Naive thymus-derived CD4-positive, alpha-beta T cell (primary cell): ENCODE measurements at regions of chr2 and their contacts with region 1.

Region 1: DNA sequence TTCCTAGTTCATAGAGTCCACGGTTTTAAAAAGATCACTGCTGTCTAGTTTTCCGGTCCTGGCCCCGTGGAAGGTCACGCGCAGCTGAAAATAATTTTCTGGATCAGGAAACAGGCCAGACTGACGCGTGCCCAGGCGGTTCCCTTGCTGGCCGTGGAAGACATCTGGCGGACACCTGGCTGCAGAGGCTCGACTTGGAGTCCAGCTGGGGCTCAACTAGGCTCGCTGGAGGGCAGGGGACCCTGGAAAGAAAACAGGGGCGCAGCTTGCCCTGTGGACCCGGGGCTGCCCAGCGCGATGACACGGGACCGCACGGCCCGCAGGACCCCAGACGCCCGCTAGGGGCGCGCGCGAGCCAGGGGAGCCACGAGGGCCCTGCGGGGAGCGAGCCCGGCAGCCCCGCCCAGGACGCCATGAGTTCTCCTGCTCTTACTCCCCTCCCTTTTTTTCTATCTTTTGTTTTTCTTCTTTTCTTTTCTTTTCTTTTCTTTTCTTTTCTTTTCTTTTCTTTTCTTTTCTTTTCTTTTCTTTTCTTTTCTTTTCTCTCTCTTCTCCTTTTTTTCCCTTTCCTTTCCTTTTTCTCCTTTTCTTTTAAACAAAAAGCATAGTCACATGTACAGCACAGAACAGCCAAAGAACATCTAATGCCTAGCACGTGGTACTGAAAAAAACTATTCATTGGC is 43.2 kb upstream of the UBE2F start:
- DNase-seq: peak; percentile 57 to 90 (median 79)
- ATAC-seq: peak; percentile 99
- H3K4me3 ChIP-seq: peak overlapping the region; percentile 55
- H3K4me3 Mint-ChIP-seq: peak overlapping the region; percentile 37 to 81 (median 68)
- H3K27ac ChIP-seq: peak overlapping the region; percentile 20
- H3K27ac Mint-ChIP-seq: peak overlapping the region in 8 of 9 donors; percentile 16 to 86 (median 56)
- H3K4me1 ChIP-seq: no peaks in the 10 kb centered on the region
- H3K4me1 Mint-ChIP-seq: peaks cover 11 to 42% (median 31%) of the 10 kb centered on the region in 7 donors
- H3K27me3 ChIP-seq: no peaks in the 10 kb centered on the region
- H3K27me3 Mint-ChIP-seq: peaks cover 0 to 2% (median 0%) of the 10 kb centered on the region in 5 donors

Region 2: DNA sequence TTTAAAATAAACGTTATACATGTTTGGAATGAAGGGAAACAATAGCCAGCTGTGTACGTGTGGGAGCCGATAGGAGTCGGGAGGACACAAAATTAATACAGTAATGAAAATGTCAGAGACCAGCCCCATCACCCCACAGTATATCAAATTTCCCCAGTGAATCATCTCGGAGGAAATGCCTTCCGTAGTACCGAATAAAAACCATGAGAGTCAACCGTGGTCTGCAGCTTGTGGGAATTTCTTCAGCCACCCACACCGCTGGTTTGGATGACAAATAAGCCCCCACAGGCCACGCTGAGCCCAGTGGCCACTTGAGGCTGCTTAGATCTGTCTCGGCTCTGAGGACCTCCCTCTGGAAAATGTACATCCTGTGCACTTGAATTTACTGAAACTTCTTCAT is 643.4 kb before region 1 on chr2:
- CTCF ChIA-PET with region 1: no interaction called
- POLR2A ChIA-PET with region 1: no interaction called
- intact Hi-C with region 1: no loop called
- DNase-seq: no peak
- ATAC-seq: no peak
- H3K4me3 ChIP-seq: no peak overlapping the region
- H3K4me3 Mint-ChIP-seq: no peak overlapping the region
- H3K27ac ChIP-seq: no peak overlapping the region
- H3K27ac Mint-ChIP-seq: no peak overlapping the region
- H3K4me1 ChIP-seq: no peaks in the 10 kb centered on the region
- H3K4me1 Mint-ChIP-seq: peaks cover 0 to 2% (median 0%) of the 10 kb centered on the region in 7 donors
- H3K27me3 ChIP-seq: no peaks in the 10 kb centered on the region
- H3K27me3 Mint-ChIP-seq: peaks cover 4 to 26% (median 14%) of the 10 kb centered on the region in 5 donors

Region 3: DNA sequence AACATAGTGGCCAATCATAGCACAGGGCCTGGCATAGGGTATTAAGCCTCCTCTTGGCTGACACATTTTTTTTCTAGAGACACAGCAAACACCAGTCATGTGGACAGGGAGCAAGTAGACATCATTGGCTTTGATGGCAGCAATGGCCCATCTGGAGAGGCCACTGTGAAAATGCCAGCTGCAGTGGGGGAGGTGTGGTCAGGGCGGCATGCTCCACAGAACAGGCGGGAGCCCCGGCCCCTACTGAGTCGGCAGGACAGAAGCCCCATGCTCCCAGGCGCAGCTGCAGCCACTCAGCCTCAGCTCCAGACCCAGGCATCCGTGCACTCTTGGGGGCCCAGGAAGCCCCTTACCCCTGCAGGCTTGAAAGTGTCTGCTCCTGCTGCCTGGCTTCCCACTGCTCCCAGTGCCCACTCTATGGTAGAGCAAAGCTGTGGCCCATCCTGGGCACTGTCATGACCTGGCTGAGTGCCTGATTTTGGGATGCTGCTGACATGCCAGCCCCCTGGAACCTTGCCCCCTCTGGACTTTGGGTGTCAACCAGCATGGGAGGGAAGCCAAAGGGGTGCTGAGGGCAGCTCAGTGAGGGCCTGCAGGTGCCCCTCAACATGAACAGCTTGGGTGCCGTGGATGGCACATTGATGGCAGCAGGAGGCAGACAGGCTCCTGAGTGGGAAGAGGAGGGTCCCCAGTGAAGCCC is 19.9 kb after region 1 on chr2:
- CTCF ChIA-PET with region 1: interaction called, 17 read pairs
- POLR2A ChIA-PET with region 1: interaction called, 14 read pairs
- intact Hi-C with region 1: no loop called
- DNase-seq: no peak
- ATAC-seq: no peak
- H3K4me3 ChIP-seq: no peak overlapping the region
- H3K4me3 Mint-ChIP-seq: peak overlapping the region in 8 of 10 donors; percentile 25 to 89 (median 62)
- H3K27ac ChIP-seq: peak overlapping the region; percentile 26
- H3K27ac Mint-ChIP-seq: peak overlapping the region; percentile 87 to 99 (median 97)
- H3K4me1 ChIP-seq: peaks cover 34 to 40% of the 10 kb centered on the region in 2 donors
- H3K4me1 Mint-ChIP-seq: peaks cover 37 to 90% (median 75%) of the 10 kb centered on the region in 7 donors
- H3K27me3 ChIP-seq: no peaks in the 10 kb centered on the region
- H3K27me3 Mint-ChIP-seq: no peaks in the 10 kb centered on the region

Region 4: DNA sequence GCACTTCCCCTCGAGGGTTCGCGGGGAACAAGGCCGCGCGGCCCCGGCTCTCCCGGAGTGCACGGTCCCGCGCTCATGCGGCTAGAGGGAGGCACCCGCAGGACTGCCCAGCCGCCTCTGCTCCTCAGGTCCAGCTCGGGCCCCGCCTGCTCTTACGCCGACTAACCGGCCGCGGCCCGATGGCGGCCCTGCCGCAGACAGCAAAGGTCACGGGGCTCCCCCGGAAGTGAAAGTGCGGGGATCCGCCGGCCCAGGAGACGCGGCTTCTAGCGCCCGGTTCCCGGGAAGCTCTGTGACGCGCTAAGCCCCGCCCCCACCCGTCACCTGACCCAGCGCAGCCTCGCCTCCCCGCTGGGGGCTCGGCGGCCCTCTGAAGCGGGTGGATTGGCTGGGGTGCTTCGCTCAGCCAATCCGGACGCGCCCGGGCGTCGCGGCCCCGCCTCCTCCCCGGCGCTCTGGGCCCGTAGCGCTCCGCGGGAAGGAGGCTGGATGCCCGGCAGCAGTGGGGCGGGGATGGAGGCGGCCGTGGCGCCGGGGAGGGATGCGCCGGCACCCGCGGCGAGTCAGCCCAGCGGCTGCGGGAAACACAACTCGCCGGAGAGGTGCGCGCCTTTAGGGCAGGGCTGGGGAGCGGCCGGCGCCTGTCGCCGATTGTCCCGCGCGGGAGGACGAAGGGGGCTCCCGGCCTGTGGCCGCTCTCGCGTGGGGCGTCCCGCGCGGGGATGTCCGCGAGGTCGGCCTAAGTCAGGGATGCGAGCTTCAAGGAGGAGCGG is 137.1 kb after region 1 on chr2 and contains the start of gene SCLY:
- CTCF ChIA-PET with region 1: no interaction called
- POLR2A ChIA-PET with region 1: no interaction called
- intact Hi-C with region 1: loop called in 1 of 2 experiments (anchors 1 kb)
- DNase-seq: peak; percentile 86 to 95 (median 93)
- ATAC-seq: peak; percentile 99
- H3K4me3 ChIP-seq: peak within 1 kb of the TSS; percentile 96
- H3K4me3 Mint-ChIP-seq: peak within 1 kb of the TSS; percentile 85 to 98 (median 88)
- H3K27ac ChIP-seq: peak within 1 kb of the TSS; percentile 85
- H3K27ac Mint-ChIP-seq: peak within 1 kb of the TSS; percentile 80 to 93 (median 90)
- H3K4me1 ChIP-seq: peaks cover 5 to 12% of the 10 kb centered on the region in 2 donors
- H3K4me1 Mint-ChIP-seq: peaks cover 24 to 57% (median 37%) of the 10 kb centered on the region in 7 donors
- H3K27me3 ChIP-seq: peaks cover 0 to 3% of the 10 kb centered on the region in 2 donors
- H3K27me3 Mint-ChIP-seq: peaks cover 3 to 16% (median 13%) of the 10 kb centered on the region in 5 donors
- total RNA-seq, gene SCLY: 16.1 to 47.3 (median 29.1) TPM

Region 5: DNA sequence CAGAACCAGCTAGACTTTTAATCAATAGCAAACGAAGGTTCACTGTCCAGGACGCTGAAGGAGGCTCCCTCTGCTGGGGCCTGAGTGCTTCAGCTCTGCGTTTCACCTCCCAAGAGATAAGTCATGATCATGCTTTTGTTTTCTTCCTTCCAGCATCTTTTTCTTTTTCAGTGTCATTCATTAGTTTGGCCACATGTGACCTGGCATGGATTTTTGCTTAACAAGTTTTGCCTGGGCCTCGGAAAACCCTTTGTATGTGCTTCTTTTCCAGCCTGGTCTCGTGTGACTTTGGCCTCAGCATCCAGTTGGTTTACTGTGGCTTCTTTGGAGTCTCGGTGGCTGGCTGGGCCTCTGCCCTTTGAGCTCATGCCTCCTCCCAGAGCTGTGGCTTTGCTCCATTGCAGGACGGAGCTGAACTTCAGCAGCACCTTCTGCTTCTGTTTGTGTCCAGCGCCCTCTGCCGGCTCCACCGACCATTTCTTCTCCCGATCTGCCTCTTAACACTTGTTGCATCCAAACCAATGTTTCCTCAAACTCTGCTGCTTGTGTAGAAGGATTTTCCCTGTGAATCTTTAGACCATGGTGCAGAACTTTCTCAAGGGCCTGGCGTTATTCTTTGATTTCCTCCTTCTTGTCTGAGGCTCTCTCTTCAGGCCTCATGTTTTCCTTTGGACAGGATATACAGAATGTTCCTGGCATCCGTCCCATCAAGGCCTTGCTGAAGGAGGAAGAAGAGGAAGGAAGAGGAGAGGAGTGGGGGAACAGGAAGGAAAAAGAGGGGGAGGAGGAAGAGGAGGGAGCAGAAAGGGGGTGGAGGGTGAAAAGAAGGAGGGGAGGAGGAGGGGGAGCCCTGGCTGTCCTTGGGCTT is 339.8 kb after region 1 on chr2:
- CTCF ChIA-PET with region 1: interaction called, 3 read pairs
- POLR2A ChIA-PET with region 1: no interaction called
- intact Hi-C with region 1: loop called in 1 of 2 experiments (anchors 1 kb)
- DNase-seq: peak; percentile 55 to 71 (median 67)
- ATAC-seq: peak; percentile 75
- H3K4me3 ChIP-seq: no peak overlapping the region
- H3K4me3 Mint-ChIP-seq: no peak overlapping the region
- H3K27ac ChIP-seq: no peak overlapping the region
- H3K27ac Mint-ChIP-seq: peak overlapping the region in 3 of 9 donors; percentile 57 to 80 (median 68)
- H3K4me1 ChIP-seq: no peaks in the 10 kb centered on the region
- H3K4me1 Mint-ChIP-seq: peaks cover 4 to 23% (median 6%) of the 10 kb centered on the region in 7 donors
- H3K27me3 ChIP-seq: no peaks in the 10 kb centered on the region
- H3K27me3 Mint-ChIP-seq: no peaks in the 10 kb centered on the region